ENCODE measurements at regions of chr4 and their contacts with region 1.

Region 1: DNA sequence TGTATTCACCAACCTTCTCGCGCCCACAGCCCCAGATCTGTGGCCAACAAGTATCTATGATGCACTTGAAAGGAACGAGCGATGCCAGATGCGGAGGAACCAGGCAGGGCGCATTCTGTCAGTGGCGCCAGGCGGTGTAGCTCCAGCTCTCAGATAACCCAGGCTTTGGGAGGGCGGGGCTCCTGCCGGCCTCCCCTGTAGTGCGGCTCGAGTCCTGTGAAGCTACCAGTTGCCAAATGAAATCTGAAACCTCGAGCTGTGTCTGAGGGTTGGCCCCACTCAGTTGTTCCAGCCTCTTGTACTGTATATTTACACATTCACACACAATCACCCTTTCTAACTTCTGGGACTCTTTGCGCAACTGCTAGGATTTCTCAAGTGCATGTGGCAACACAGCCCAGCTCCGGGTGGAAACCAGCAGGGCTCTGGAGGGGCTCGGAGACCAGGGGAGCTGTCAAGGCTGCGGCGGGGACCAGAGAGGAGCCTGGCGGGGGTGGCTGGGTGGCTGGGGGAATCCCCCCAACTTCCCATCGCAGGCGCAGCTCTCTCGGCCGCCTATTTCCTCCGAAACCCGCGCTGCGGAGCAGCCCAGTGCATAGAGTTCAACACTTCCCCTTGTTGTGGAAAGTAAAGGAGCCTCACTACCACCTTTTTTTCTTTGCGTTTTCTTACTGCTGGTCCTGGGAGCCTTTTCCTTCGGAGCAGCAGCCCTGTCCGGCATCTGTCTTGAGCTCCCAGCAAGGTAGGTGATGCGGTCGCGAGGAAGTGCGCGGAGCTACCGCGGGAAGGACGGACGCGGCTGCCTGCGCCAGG is at the start of gene ARHGAP24:
- DNase-seq: peak in 8 of 10 donors; percentile 5 to 62 (median 48)
- H3K4me3 ChIP-seq: peak within 1 kb of the TSS; percentile 36 to 76 (median 57)
- H3K27ac ChIP-seq: peak within 1 kb of the TSS in 30 of 59 donors; percentile 5 to 77 (median 40)
- H3K27me3 ChIP-seq: peaks cover 0 to 30% (median 6%) of the 10 kb centered on the region in 45 donors
- CTCF ChIP-seq: no peak
- total RNA-seq, gene ARHGAP24: 7.6 to 37.1 (median 18.6) TPM

Region 2: GRCh38 chr4:85578076-85578475 is 103.1 kb after region 1 on chr4:
- intact Hi-C with region 1: no loop called
- DNase-seq: no peak
- H3K4me3 ChIP-seq: no peak overlapping the region
- H3K27ac ChIP-seq: no peak overlapping the region
- H3K27me3 ChIP-seq: no peaks in the 10 kb centered on the region
- CTCF ChIP-seq: no peak

Region 3: DNA sequence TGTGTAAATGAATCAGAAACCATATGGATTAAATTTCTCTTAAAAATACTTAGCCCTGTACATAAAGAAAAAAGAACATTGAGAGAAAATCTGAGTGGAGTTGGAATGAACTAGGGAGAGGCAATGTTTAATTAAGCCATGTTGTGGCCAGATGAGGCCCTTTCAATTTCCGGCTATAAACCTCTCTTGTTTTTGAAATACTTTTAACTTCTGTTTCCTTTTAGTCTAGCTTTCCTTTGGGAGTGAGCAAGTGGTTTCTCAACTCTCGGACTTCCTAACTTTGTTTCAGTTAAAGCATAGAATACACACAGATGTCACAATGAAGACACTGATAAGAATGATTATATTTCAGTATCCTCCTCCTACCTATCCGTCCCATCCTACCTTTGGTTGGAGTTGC is 197.1 kb after region 1 on chr4:
- intact Hi-C with region 1: loop called in 1 of 2 experiments (anchors 5 kb)
- DNase-seq: no peak
- H3K4me3 ChIP-seq: no peak overlapping the region
- H3K27ac ChIP-seq: peak overlapping the region in 27 of 59 donors; percentile 0 to 70 (median 36)
- H3K27me3 ChIP-seq: peaks cover 0 to 3% (median 0%) of the 10 kb centered on the region in 45 donors
- CTCF ChIP-seq: no peak